Endothelial cell of umbilical vein (primary cell): ENCODE measurements at regions of chr4 and their contacts with region 1.

Region 1: DNA sequence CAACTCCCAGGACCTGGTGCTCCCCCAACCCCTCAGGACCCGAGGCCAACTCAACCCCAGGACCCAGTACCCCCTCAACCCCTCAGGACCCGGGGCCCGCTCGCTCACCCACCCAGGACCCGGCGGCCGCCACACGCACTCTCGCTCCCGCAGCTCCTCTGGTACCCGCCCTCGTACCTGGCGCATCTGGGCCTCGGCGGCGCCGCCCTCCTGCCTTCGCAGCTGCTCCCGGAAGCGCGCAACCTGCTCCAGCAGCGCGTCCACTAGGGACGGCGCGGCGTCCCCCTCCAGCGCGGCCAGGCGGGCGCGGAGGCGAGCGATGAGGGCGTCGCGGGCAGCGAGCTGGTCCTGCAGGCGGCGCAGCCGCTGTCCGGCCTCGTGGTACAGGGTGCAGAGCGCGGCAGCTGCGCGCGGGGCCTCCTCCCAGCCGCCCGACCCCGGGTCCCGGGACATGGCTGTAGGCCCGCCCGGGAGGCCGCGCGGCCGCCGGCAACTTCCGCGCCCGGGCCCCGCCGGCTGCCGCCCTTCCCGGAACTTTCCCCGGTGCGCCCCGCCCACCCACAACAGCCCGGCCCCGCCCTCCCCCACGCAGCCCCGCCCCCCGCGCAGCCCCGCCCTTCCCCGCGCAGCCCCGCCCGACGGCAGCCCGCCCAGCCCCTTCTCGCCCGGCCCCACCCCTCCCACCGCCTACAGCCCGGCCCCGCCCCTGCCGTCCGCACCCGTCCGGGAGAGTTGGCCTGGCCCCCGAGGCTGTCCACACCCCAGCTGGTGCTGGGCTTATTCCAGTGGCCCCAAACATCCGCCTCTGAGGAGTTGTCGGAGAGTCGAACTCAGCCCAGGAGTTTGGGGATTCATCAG is at the start of gene TNIP2:
- DNase-seq: peak; percentile 75
- H3K4me3 ChIP-seq: peak within 1 kb of the TSS; percentile 63 to 78 (median 78)
- H3K27ac ChIP-seq: peak within 1 kb of the TSS; percentile 45
- H3K4me1 ChIP-seq: peaks cover 9% of the 10 kb centered on the region
- H3K27me3 ChIP-seq: no peaks in the 10 kb centered on the region
- CTCF ChIP-seq: peak; percentile 26 to 39
- POLR2A ChIP-seq: peak; percentile 87
- total RNA-seq, gene TNIP2: 49.0 and 52.1 TPM in 2 replicates

Region 2: GRCh38 chr4:2934813-2935761 is 179.0 kb after region 1 on chr4:
- CTCF ChIA-PET with region 1: no interaction called
- POLR2A ChIA-PET with region 1: no interaction called
- dilution Hi-C with region 1: no loop called
- intact Hi-C with region 1: loop called (anchors 2 kb)
- DNase-seq: peak; percentile 86
- H3K4me3 ChIP-seq: peak overlapping the region; percentile 37 to 69 (median 65)
- H3K27ac ChIP-seq: peak overlapping the region; percentile 61
- H3K4me1 ChIP-seq: peaks cover 28% of the 10 kb centered on the region
- H3K27me3 ChIP-seq: no peaks in the 10 kb centered on the region
- CTCF ChIP-seq: no peak
- POLR2A ChIP-seq: peak; percentile 86

Region 3: DNA sequence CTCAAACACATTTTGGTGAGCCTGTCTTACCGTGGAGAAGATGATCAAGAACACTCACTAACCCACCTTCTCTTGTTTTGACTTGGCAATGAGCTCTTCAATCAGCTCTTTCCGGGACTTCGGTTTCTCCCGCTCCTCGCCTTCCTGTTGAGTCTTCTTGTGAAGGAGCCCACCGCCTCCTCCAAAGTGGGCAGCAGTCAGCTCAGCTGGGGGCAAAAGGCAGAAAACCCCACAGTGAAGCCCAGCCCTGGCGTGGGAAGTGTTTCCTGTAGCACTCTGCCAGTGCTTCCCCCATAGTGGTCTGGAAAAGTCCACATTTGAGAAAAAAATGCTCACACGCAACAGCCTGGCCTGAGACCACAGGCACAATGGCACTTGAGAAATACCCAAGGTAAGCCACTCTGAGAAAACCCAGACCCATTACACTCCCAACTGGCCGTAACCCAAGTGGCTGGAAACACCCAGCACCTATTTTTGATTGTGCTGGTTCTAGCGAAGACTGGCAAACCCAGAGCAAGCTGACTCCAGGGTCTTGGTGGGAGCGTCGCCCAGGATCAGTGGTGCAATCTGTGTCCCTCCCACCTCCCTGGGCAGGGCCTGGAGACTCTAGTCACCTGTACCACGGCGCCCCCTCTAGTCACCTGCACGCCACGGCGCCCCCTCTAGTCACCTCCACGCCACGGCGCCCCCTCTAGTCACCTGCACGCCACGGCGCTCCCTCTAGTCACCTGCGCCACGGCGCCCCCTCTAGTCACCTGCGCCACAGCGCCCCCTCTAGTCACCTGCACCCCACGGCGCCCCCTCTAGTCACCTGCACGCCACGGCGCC is 198.5 kb after region 1 on chr4:
- CTCF ChIA-PET with region 1: no interaction called
- POLR2A ChIA-PET with region 1: no interaction called
- dilution Hi-C with region 1: no loop called
- intact Hi-C with region 1: no loop called
- DNase-seq: no peak
- H3K4me3 ChIP-seq: no peak overlapping the region
- H3K27ac ChIP-seq: no peak overlapping the region
- H3K4me1 ChIP-seq: peaks cover 13% of the 10 kb centered on the region
- H3K27me3 ChIP-seq: no peaks in the 10 kb centered on the region
- CTCF ChIP-seq: peak in 1 of 2 donors; percentile 6
- POLR2A ChIP-seq: no peak